Right ventricle myocardium inferior (tissue), 1 donor: ENCODE measurements at regions of chr10 and their contacts with region 1.

Region 1: DNA sequence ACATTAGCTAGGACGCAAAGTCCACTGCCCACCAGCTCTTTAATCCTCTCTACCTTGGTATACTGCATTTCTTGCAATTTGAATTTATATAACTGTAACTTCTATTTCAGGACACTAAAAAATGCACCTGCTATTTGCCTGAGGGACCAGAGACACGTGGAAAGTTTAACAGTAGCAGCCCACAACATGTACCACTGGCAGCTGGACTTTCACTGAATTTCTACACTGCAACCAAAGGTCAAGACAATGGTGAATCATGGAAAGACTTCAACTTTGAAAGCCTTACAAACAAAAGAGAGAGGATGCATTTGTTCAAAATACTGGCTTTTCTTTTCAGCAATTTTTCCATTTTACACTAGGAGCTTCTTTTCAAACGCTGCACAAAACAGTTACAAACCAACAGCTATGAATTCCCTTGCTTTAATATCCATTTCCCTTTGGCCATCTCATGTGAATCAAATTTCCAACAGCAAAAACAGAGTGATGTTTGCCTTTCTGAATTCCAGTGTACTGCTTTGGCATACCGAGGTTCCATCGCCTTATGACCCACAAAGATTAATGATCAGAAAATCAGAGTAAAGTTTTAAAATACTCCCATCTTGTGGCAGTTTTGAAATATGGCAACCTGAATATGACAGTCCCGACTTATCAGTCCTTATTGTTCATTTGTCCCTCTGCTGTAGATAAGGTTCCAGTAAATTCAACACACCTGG is 29.9 kb upstream of the HNRNPH3 start:
- DNase-seq: no peak
- ATAC-seq: peak; percentile 59

Region 2: GRCh38 chr10:67858971-67859370 is 443.0 kb before region 1 on chr10:
- intact Hi-C with region 1: loop called (anchors 5 kb)
- DNase-seq: no peak
- ATAC-seq: no peak

Region 3: GRCh38 chr10:68082872-68083271 is 219.1 kb before region 1 on chr10:
- intact Hi-C with region 1: loop called (anchors 2 kb)
- DNase-seq: no peak
- ATAC-seq: no peak

Region 4: GRCh38 chr10:68212721-68213352 is 89.1 kb before region 1 on chr10:
- intact Hi-C with region 1: loop called (anchors 10 kb)
- DNase-seq: no peak
- ATAC-seq: no peak